ENCODE measurements at regions of chrX and their contacts with region 1.

Region 1: DNA sequence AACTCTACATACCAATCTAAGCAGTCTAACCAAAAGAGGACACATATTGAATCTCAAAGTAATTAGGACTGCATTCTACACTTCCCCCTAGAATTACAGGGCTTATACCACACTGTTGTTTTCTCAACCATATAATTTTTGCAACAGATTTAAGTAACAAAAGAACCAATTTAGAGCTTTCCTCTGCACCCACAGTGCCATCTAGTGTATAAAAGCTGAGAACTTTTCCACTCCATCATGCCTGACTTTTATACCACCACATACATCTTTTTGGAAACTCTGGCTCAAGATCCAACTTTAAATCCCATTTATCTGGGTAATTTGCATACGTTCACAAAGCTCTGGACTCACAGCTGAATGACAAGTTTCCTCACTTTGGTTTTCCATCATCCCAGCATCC is 99.5 kb downstream of the EFHC2 start:
- H3K4me3 ChIP-seq: no peak overlapping the region
- H3K27ac ChIP-seq: no peak overlapping the region
- H3K4me1 ChIP-seq: no peaks in the 10 kb centered on the region
- CTCF ChIP-seq: no peak

Region 2: DNA sequence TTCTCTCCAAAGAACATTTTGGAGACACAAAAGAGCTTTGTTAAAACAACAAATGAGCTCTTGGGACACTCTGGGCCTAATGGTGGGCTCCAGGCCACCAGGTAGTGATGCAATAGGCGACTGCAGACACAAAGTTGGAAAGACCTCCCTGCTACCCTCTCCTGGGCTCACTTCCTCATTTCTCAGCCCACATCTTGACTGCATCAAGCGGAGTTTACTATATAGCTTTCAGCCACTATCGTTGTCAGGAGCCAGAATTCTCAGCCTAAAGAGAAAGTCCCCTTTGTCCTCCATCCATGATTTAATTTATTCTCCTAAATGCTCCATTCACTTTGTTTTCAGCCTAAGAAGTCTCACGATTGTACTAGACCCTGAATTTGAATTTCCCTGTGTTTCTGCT is 15.4 kb before region 1 on chrX:
- CTCF ChIA-PET with region 1: interaction called, 13 read pairs
- POLR2A ChIA-PET with region 1: no interaction called
- H3K4me3 ChIP-seq: no peak overlapping the region
- H3K27ac ChIP-seq: no peak overlapping the region
- H3K4me1 ChIP-seq: no peaks in the 10 kb centered on the region
- CTCF ChIP-seq: no peak

Region 3: GRCh38 chrX:44264936-44265335 is 20.9 kb after region 1 on chrX:
- CTCF ChIA-PET with region 1: interaction called, 10 read pairs
- POLR2A ChIA-PET with region 1: no interaction called
- H3K4me3 ChIP-seq: no peak overlapping the region
- H3K27ac ChIP-seq: no peak overlapping the region
- H3K4me1 ChIP-seq: no peaks in the 10 kb centered on the region
- CTCF ChIP-seq: no peak

Measured in HEK293 (cell line).